Panc1 (cell line): ENCODE measurements at regions of chr16 and their contacts with region 1.

Region 1: GRCh38 chr16:71883849-71884638 is at the start of gene ZNF821:
- DNase-seq: no peak
- ATAC-seq: peak; percentile 81
- H3K4me3 ChIP-seq: peak within 1 kb of the TSS; percentile 77 to 80
- H3K27ac ChIP-seq: peak within 1 kb of the TSS; percentile 65
- H3K4me1 ChIP-seq: peaks cover 6% of the 10 kb centered on the region
- H3K27me3 ChIP-seq: no peaks in the 10 kb centered on the region
- CTCF ChIP-seq: peak; percentile 62
- total RNA-seq, gene ZNF821: 6.4 TPM

Region 2: DNA sequence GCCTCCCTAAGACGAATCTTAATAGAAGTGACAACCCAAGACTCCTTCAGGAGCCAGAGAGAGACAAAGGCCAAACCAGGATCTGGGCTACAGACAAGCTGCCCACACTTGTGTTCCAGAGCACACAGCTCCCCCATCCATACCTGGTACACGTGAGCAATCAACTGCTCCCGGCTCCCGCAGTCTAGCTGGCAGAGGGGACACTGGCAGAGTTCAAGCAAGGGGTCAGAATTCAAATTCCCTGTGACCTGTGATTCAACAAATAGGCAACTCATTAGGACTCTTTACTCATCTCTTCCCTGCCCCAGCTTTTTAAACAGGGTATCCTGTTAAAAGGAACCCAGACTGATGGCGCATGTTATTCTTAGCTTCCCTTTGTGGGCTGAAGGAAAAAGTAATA is 20.0 kb before region 1 on chr16:
- CTCF ChIA-PET with region 1: interaction called, 10 read pairs
- POLR2A ChIA-PET with region 1: no interaction called
- in situ Hi-C with region 1: no loop called
- intact Hi-C with region 1: no loop called
- DNase-seq: no peak
- ATAC-seq: no peak
- H3K4me3 ChIP-seq: no peak overlapping the region
- H3K27ac ChIP-seq: no peak overlapping the region
- H3K4me1 ChIP-seq: no peaks in the 10 kb centered on the region
- H3K27me3 ChIP-seq: no peaks in the 10 kb centered on the region
- CTCF ChIP-seq: no peak